ENCODE measurements at regions of chr22 and their contacts with region 1.

Region 1: GRCh38 chr22:26287382-26288225 is 118.3 kb downstream of the SEZ6L start:
- DNase-seq: no peak
- ATAC-seq: no peak
- H3K4me3 ChIP-seq: no peak overlapping the region
- H3K27ac ChIP-seq: no peak overlapping the region
- H3K4me1 ChIP-seq: no peaks in the 10 kb centered on the region
- H3K27me3 ChIP-seq: no peaks in the 10 kb centered on the region
- CTCF ChIP-seq: no peak
- POLR2A ChIP-seq: no peak

Region 2: GRCh38 chr22:26229910-26230309 is 57.7 kb before region 1 on chr22:
- in situ Hi-C with region 1: no loop called
- intact Hi-C with region 1: loop called (anchors 10 kb)
- DNase-seq: peak; percentile 29 to 50
- ATAC-seq: peak; percentile 56 to 71
- H3K4me3 ChIP-seq: no peak overlapping the region
- H3K27ac ChIP-seq: peak overlapping the region in 3 of 4 donors; percentile 15 to 68 (median 35)
- H3K4me1 ChIP-seq: peaks cover 61 to 65% of the 10 kb centered on the region in 2 donors
- H3K27me3 ChIP-seq: no peaks in the 10 kb centered on the region
- CTCF ChIP-seq: no peak
- POLR2A ChIP-seq: no peak

Region 3: GRCh38 chr22:26259519-26259918 is 28.1 kb before region 1 on chr22:
- in situ Hi-C with region 1: no loop called
- intact Hi-C with region 1: no loop called
- DNase-seq: no peak
- ATAC-seq: no peak
- H3K4me3 ChIP-seq: no peak overlapping the region
- H3K27ac ChIP-seq: no peak overlapping the region
- H3K4me1 ChIP-seq: no peaks in the 10 kb centered on the region
- H3K27me3 ChIP-seq: peaks cover 0 to 4% (median 0%) of the 10 kb centered on the region in 3 donors
- CTCF ChIP-seq: no peak
- POLR2A ChIP-seq: no peak